OCI-LY7 (cell line): ENCODE measurements at regions of chr13 and their contacts with region 1.

Region 1: DNA sequence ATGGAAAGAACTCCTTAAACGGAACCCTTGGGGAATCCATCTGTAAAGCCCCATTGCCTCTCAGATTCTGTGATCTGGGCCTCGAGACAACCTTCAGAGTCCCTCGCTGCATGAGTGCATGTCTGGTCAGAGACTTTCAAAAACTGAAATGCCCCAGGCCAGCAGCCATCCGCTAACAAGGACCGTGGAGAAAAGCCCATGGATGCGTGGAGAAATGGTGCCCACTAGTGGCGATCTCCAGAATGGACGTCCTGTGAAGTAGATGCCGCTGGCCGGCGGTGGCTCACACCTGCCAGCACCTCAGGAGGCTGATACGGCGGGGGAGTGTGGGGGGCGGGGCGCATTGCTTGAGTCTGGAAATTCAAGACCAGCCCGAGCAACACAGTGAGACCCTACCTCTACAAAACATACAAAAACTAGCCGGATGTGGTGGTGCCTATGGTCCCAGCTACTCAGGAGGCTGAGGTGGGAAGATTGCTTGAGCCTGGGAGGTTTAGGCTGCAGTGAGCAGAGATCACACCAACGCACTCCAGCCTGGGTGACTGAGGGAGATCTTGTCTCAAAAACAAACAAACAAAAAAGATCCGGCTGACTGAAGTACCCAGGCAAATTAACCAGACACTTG is 7.9 kb upstream of the CDC16 start:
- DNase-seq: peak; percentile 72
- H3K4me3 ChIP-seq: no peak overlapping the region
- H3K27ac ChIP-seq: no peak overlapping the region
- H3K4me1 ChIP-seq: peaks cover 8% of the 10 kb centered on the region
- CTCF ChIP-seq: peak; percentile 76

Region 2: GRCh38 chr13:113816946-113817859 is 409.6 kb before region 1 on chr13:
- CTCF ChIA-PET with region 1: no interaction called
- POLR2A ChIA-PET with region 1: no interaction called
- intact Hi-C with region 1: loop called (anchors 2 kb)
- DNase-seq: peak; percentile 83
- H3K4me3 ChIP-seq: peak overlapping the region; percentile 98
- H3K27ac ChIP-seq: peak overlapping the region; percentile 34
- H3K4me1 ChIP-seq: peaks cover 4% of the 10 kb centered on the region
- CTCF ChIP-seq: peak; percentile 70

Region 3: GRCh38 chr13:113951246-113951999 is 275.4 kb before region 1 on chr13:
- CTCF ChIA-PET with region 1: no interaction called
- POLR2A ChIA-PET with region 1: no interaction called
- intact Hi-C with region 1: loop called (anchors 2 kb)
- DNase-seq: peak; percentile 39
- H3K4me3 ChIP-seq: no peak overlapping the region
- H3K27ac ChIP-seq: no peak overlapping the region
- H3K4me1 ChIP-seq: no peaks in the 10 kb centered on the region
- CTCF ChIP-seq: peak; percentile 64; the same call in 1 of the 2 replicates

Region 4: GRCh38 chr13:114143806-114144605 is 82.8 kb before region 1 on chr13:
- CTCF ChIA-PET with region 1: no interaction called
- POLR2A ChIA-PET with region 1: no interaction called
- intact Hi-C with region 1: loop called (anchors 2 kb)
- DNase-seq: peak; percentile 78
- H3K4me3 ChIP-seq: no peak overlapping the region
- H3K27ac ChIP-seq: peak overlapping the region; percentile 70
- H3K4me1 ChIP-seq: peaks cover 35% of the 10 kb centered on the region
- CTCF ChIP-seq: peak; percentile 71